GM13976 (cell line): ENCODE measurements at regions of chr19 and their contacts with region 1.

Region 1: GRCh38 chr19:13588957-13589833 is 82.9 kb upstream of the CACNA1A start:
- DNase-seq: peak; percentile 87
- CTCF ChIP-seq: peak; percentile 91

Region 2: DNA sequence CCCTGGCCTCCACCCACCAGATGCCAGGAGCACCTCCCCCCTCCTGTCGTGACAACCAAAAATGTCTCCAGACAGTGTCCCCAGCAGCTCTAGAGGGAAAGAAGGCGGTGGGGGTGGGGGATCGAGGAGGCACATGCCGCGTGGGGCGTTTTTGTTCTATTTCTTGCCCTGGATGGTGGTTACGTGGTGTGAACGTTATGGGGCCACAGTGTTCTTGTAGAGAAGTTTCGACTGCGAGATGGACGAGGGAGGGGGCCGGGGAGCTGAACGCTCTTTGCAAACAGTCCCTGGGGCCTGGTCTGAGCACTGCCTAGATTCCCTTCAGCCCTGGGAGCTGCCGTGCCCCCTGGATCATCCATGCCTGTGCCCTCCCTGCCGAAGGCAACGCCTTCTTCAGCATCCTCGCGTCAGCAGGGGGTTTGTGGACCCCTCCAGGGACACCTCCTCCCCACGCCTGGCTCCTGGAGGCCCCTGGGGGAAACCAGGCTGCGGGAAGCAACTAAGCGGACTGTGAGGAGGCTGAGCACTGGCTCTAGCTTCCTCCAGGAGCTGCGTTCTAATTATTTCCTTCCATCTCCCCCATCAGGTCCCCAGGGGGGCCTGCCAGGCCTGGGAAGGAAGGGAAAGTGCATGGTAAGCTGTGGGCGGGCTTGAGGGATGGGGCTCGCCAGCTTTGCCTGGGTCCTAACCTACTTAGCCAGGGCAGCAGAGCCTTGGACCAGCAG is 307.5 kb before region 1 on chr19:
- in situ Hi-C with region 1: loop called (anchors 10 kb)
- DNase-seq: peak; percentile 53
- CTCF ChIP-seq: no peak

Region 3: GRCh38 chr19:13681509-13681908 is 92.3 kb after region 1 on chr19:
- in situ Hi-C with region 1: no loop called
- DNase-seq: no peak
- CTCF ChIP-seq: no peak

Region 4: GRCh38 chr19:13872695-13873389 is 283.6 kb after region 1 on chr19:
- in situ Hi-C with region 1: loop called (anchors 5 kb)
- DNase-seq: peak; percentile 78
- CTCF ChIP-seq: peak; percentile 48